CD8-positive, alpha-beta T cell (primary cell): ENCODE measurements at regions of chr14 and their contacts with region 1.

Region 1: GRCh38 chr14:61461808-61462275 is 140.5 kb downstream of the PRKCH start:
- DNase-seq: peak in 5 of 9 experiments; percentile 27 to 81 (median 49)
- ATAC-seq: peak; percentile 53
- H3K4me3 ChIP-seq: no peak overlapping the region
- H3K4me3 Mint-ChIP-seq: peak overlapping the region; percentile 37
- H3K27ac ChIP-seq: peak overlapping the region; percentile 0 to 61
- H3K27ac Mint-ChIP-seq: peak overlapping the region; percentile 97
- H3K4me1 ChIP-seq: peaks cover 30% of the 10 kb centered on the region
- H3K4me1 Mint-ChIP-seq: peaks cover 70% of the 10 kb centered on the region
- H3K27me3 ChIP-seq: no peaks in the 10 kb centered on the region
- H3K27me3 Mint-ChIP-seq: no peaks in the 10 kb centered on the region
- CTCF ChIP-seq: peak; percentile 89

Region 2: GRCh38 chr14:61025251-61026223 is 436.3 kb before region 1 on chr14:
- CTCF ChIA-PET with region 1: no interaction called
- POLR2A ChIA-PET with region 1: no interaction called
- intact Hi-C with region 1: no loop called
- DNase-seq: peak in 8 of 9 experiments; percentile 9 to 74 (median 50)
- ATAC-seq: no peak
- H3K4me3 ChIP-seq: no peak overlapping the region
- H3K4me3 Mint-ChIP-seq: no peak overlapping the region
- H3K27ac ChIP-seq: no peak overlapping the region
- H3K27ac Mint-ChIP-seq: no peak overlapping the region
- H3K4me1 ChIP-seq: no peaks in the 10 kb centered on the region
- H3K4me1 Mint-ChIP-seq: peaks cover 2% of the 10 kb centered on the region
- H3K27me3 ChIP-seq: no peaks in the 10 kb centered on the region
- H3K27me3 Mint-ChIP-seq: no peaks in the 10 kb centered on the region
- CTCF ChIP-seq: peak; percentile 84

Region 3: GRCh38 chr14:61269321-61270083 is 192.3 kb before region 1 on chr14:
- CTCF ChIA-PET with region 1: interaction called, 4 read pairs
- POLR2A ChIA-PET with region 1: no interaction called
- intact Hi-C with region 1: loop called in 1 of 2 experiments (anchors 1 kb)
- DNase-seq: peak; percentile 63 to 87 (median 76)
- ATAC-seq: peak; percentile 96
- H3K4me3 ChIP-seq: peak overlapping the region; percentile 27 to 46
- H3K4me3 Mint-ChIP-seq: peak overlapping the region; percentile 75
- H3K27ac ChIP-seq: no peak overlapping the region
- H3K27ac Mint-ChIP-seq: no peak overlapping the region
- H3K4me1 ChIP-seq: no peaks in the 10 kb centered on the region
- H3K4me1 Mint-ChIP-seq: peaks cover 4% of the 10 kb centered on the region
- H3K27me3 ChIP-seq: peaks cover 0 to 4% of the 10 kb centered on the region in 2 experiments
- H3K27me3 Mint-ChIP-seq: peaks cover 38% of the 10 kb centered on the region
- CTCF ChIP-seq: peak; percentile 96

Region 4: DNA sequence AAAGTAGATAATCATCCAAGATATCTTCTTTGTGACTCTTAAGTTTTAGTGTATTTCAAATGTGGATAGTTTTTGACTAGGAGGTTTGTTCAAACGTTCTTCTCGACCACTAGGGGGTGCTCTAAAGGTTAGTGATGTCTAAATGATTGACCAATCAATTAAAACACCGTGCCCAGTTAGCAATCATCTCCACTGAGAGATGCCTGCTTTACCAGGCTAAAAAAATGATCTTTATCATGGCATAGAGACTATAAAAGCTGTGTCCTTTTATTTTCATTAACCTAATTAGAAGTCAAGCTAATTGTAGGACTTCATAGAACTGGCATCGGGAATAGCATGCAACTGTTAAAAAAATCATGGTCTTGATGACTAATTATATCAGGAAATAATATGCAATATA is 13.5 kb after region 1 on chr14:
- CTCF ChIA-PET with region 1: interaction called, 34 read pairs
- POLR2A ChIA-PET with region 1: interaction called, 4 read pairs
- intact Hi-C with region 1: loop called in 1 of 2 experiments (anchors 1 kb)
- DNase-seq: peak in 3 of 9 experiments; percentile 39 to 80 (median 69)
- ATAC-seq: no peak
- H3K4me3 ChIP-seq: no peak overlapping the region
- H3K4me3 Mint-ChIP-seq: no peak overlapping the region
- H3K27ac ChIP-seq: peak overlapping the region; percentile 72 to 98
- H3K27ac Mint-ChIP-seq: peak overlapping the region; percentile 97
- H3K4me1 ChIP-seq: peaks cover 95% of the 10 kb centered on the region
- H3K4me1 Mint-ChIP-seq: peaks cover 93% of the 10 kb centered on the region
- H3K27me3 ChIP-seq: no peaks in the 10 kb centered on the region
- H3K27me3 Mint-ChIP-seq: no peaks in the 10 kb centered on the region
- CTCF ChIP-seq: peak; percentile 45

Region 5: DNA sequence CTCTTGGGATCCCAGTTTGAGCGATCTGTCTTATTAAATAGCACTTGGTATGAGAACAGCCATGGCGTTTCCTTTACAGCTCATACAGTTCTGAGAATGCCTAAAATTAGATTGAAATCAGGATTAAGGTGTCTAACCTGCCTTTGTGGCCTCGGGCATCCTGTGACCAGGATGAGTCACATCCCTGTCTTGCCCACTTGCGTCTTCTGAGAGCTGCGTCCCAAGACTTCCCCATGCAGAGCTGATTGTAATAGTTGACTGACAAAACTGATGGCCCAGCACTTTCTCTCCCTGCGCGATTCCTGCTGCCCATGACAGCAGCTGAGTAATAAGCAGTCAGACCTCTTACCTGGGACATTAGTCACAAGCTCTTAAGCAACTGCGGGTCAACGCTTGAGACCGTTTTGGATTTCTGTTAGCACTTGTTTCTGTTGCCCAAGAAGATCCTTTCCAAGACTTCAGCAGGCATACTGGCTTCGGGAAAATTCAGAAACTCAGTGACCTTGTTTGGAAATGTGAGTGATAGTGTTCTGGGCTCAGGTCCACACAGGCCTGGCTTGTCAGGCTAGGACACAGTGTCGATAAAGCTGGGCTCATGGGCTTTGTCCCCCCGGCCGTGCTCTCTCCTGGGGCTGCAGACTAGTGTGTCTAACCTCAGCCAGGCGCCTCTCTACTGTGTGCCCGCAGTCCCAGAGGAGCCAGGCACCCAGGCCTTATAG is 63.6 kb after region 1 on chr14:
- CTCF ChIA-PET with region 1: interaction called, 3 read pairs
- POLR2A ChIA-PET with region 1: no interaction called
- intact Hi-C with region 1: loop called (anchors 5 kb)
- DNase-seq: peak in 6 of 9 experiments; percentile 41 to 74 (median 62)
- ATAC-seq: peak; percentile 59
- H3K4me3 ChIP-seq: no peak overlapping the region
- H3K4me3 Mint-ChIP-seq: peak overlapping the region; percentile 33
- H3K27ac ChIP-seq: peak overlapping the region; percentile 13 to 67
- H3K27ac Mint-ChIP-seq: peak overlapping the region; percentile 84
- H3K4me1 ChIP-seq: peaks cover 44% of the 10 kb centered on the region
- H3K4me1 Mint-ChIP-seq: peaks cover 78% of the 10 kb centered on the region
- H3K27me3 ChIP-seq: no peaks in the 10 kb centered on the region
- H3K27me3 Mint-ChIP-seq: no peaks in the 10 kb centered on the region
- CTCF ChIP-seq: no peak

Region 6: DNA sequence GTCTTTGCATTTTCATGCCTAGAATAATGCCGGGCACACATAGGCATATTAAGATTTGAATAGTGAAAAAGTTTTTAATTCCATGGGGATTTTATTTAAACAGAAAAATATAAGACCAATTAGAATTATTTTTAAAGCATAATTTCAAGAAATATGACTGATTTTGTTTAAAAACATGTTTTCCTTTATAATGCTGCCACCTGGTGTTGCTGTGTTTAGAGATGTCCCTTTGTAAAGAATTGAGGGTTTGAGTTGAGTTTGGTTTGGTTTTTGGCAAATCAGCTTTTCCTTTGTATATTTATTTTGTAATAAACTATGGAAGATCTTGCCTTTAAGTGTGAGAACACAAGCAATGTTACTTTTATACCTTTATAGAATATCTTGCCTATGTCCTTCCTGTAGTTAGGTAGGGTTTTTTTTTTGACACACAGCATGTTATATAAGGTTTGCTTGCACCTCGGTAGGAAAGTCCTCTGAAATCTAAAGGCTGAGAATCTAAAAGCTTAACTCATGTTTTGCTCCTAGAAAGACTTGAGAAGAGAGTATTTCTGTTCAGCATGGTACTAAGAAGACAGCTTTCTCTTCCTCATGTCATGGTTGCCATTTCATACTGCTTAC is 269.0 kb after region 1 on chr14:
- CTCF ChIA-PET with region 1: interaction called, 37 read pairs
- POLR2A ChIA-PET with region 1: no interaction called
- intact Hi-C with region 1: loop called (anchors 1 kb)
- DNase-seq: peak in 3 of 9 experiments; percentile 19 to 58 (median 51)
- ATAC-seq: no peak
- H3K4me3 ChIP-seq: no peak overlapping the region
- H3K4me3 Mint-ChIP-seq: no peak overlapping the region
- H3K27ac ChIP-seq: no peak overlapping the region
- H3K27ac Mint-ChIP-seq: peak overlapping the region; percentile 42
- H3K4me1 ChIP-seq: peaks cover 3% of the 10 kb centered on the region
- H3K4me1 Mint-ChIP-seq: peaks cover 20% of the 10 kb centered on the region
- H3K27me3 ChIP-seq: no peaks in the 10 kb centered on the region
- H3K27me3 Mint-ChIP-seq: no peaks in the 10 kb centered on the region
- CTCF ChIP-seq: peak; percentile 73